Endothelial cell of umbilical vein (primary cell): ENCODE measurements at regions of chr14 and their contacts with region 1.

Region 1: GRCh38 chr14:80291101-80291500 is 79.8 kb upstream of the DIO2 start:
- DNase-seq: no peak
- H3K4me3 ChIP-seq: no peak overlapping the region
- H3K27ac ChIP-seq: no peak overlapping the region
- H3K4me1 ChIP-seq: no peaks in the 10 kb centered on the region
- H3K27me3 ChIP-seq: no peaks in the 10 kb centered on the region
- CTCF ChIP-seq: no peak
- POLR2A ChIP-seq: no peak

Region 2: DNA sequence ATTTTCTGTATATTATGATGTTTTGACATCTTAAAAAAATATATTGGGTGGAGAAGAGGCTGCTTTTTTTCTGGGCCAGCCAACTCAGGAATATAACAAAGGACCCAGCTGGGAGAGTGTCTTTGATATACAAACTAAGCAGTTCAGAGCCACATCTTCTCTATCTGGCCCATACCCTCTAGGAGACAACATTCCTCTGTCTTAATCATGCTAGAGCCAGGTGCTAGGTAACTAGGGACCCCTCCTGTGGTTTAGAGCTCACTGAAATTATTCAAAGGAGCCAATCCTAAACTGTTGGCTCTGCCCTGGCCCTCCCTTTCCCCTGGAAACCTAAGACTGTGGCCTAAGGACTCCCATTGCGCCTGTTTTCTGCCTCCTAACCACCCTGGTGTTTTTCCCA is 113.3 kb after region 1 on chr14:
- CTCF ChIA-PET with region 1: no interaction called
- POLR2A ChIA-PET with region 1: no interaction called
- dilution Hi-C with region 1: no loop called
- intact Hi-C with region 1: no loop called
- DNase-seq: no peak
- H3K4me3 ChIP-seq: no peak overlapping the region
- H3K27ac ChIP-seq: no peak overlapping the region
- H3K4me1 ChIP-seq: no peaks in the 10 kb centered on the region
- H3K27me3 ChIP-seq: no peaks in the 10 kb centered on the region
- CTCF ChIP-seq: no peak
- POLR2A ChIP-seq: no peak

Region 3: GRCh38 chr14:80628547-80628946 is 337.4 kb after region 1 on chr14:
- CTCF ChIA-PET with region 1: no interaction called
- POLR2A ChIA-PET with region 1: interaction called, 11 read pairs
- dilution Hi-C with region 1: no loop called
- intact Hi-C with region 1: no loop called
- DNase-seq: no peak
- H3K4me3 ChIP-seq: no peak overlapping the region
- H3K27ac ChIP-seq: no peak overlapping the region
- H3K4me1 ChIP-seq: no peaks in the 10 kb centered on the region
- H3K27me3 ChIP-seq: no peaks in the 10 kb centered on the region
- CTCF ChIP-seq: no peak
- POLR2A ChIP-seq: no peak

Region 4: GRCh38 chr14:82011460-82011859 is 1720.4 kb after region 1 on chr14:
- CTCF ChIA-PET with region 1: no interaction called
- POLR2A ChIA-PET with region 1: no interaction called
- dilution Hi-C with region 1: no loop called
- intact Hi-C with region 1: no loop called
- DNase-seq: no peak
- H3K4me3 ChIP-seq: no peak overlapping the region
- H3K27ac ChIP-seq: no peak overlapping the region
- H3K4me1 ChIP-seq: no peaks in the 10 kb centered on the region
- H3K27me3 ChIP-seq: no peaks in the 10 kb centered on the region
- CTCF ChIP-seq: no peak
- POLR2A ChIP-seq: no peak